ENCODE measurements at regions of chr19 and their contacts with region 1.

Region 1: DNA sequence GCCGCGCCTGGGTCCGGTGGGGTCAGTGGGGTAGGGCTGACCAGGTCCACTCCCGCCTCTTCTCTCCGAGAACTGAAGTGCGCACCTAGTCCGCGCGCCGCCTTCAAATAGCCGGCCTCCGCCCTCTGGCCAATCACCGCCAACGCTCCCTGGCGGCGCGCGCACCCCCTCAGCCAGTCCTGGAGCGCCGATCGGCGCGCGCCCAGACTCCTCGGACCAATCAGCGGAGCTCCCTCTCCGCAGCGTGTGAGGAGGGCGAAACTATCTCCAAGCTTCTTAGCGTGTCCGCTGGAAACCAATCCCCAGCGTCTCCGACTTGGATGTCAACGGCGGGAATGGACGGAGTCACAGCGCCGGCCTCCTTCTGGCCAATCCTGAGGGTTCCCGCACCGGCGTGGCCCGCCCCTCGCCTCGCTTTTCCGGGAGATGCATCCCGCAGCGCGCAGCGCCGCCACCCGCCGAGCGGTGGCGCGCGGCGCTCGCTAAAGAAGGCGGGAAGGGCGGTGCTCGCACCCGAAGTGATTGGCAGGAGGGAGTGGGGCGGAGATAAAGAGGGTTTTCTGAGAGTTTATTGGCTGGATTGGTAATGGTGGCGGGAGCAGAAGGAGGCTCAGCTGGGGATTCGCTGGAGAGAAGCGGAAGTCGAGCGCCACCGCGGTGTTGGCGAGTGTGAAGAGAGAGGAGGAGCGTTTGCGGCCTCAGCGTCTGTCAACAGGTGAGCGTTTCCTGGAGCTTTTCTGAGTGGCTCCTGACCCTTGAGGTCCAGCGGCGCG is at the start of gene ASF1B:
- DNase-seq: peak; percentile 100
- H3K4me3 ChIP-seq: peak within 1 kb of the TSS; percentile 95
- H3K27ac ChIP-seq: peak within 1 kb of the TSS; percentile 85
- H3K4me1 ChIP-seq: peaks cover 21% of the 10 kb centered on the region
- CTCF ChIP-seq: peak; percentile 73
- total RNA-seq, gene ASF1B: 115 and 202 TPM in 2 replicates

Region 2: DNA sequence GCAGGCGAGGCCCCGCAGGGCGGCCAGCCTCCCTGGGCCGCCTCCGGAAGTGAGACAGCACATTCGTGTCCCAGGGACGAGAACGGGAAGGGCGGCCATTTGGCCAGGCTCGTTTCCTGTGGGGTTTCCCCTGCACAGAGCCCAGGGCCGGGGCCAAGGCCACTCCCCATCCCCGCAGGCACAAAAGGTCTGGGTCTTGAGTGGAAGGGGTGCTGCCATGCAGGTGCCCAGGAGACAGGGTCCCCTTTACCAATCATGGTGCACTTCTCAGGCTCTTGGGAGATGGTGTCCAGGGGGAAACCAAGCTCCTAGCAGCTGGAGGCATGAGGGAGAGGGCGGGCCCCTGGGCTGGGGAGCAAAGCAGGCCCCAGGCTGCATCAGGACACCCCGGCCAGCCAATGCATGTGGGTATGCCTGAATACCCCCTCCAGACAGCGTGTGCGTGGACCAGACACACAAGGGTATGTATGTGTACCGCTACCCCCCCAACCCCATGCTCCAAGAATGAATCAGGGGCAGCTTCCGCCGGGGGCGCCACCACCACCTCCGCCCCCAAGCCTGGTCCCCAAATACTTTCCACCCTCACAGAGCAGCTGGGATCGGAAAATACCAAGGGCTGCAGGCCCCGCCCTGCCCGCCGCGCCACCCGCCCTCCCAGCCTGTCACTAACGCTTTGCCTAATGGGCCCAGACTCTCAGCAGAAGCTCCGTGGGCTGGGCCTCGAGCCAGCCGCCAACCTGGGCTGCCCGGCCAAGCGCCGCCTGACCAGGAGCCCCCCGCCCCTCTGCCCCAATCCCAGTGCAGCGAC is 297.4 kb before region 1 on chr19:
- CTCF ChIA-PET with region 1: interaction called, 10 read pairs
- POLR2A ChIA-PET with region 1: interaction called, 3 read pairs
- intact Hi-C with region 1: no loop called
- DNase-seq: peak; percentile 76
- H3K4me3 ChIP-seq: peak overlapping the region; percentile 65
- H3K27ac ChIP-seq: peak overlapping the region; percentile 64
- H3K4me1 ChIP-seq: peaks cover 70% of the 10 kb centered on the region
- CTCF ChIP-seq: 0 out of 2 replicates have a peak, but pooled peaks have one; percentile 24

Region 3: GRCh38 chr19:14005349-14006242 is 131.1 kb before region 1 on chr19:
- CTCF ChIA-PET with region 1: no interaction called
- POLR2A ChIA-PET with region 1: no interaction called
- intact Hi-C with region 1: no loop called
- DNase-seq: peak; percentile 91
- H3K4me3 ChIP-seq: peak overlapping the region; percentile 78
- H3K27ac ChIP-seq: peak overlapping the region; percentile 87
- H3K4me1 ChIP-seq: peaks cover 49% of the 10 kb centered on the region
- CTCF ChIP-seq: no peak

Region 4: GRCh38 chr19:14035709-14036108 is 101.0 kb before region 1 on chr19:
- CTCF ChIA-PET with region 1: no interaction called
- POLR2A ChIA-PET with region 1: no interaction called
- intact Hi-C with region 1: no loop called
- DNase-seq: no peak
- H3K4me3 ChIP-seq: no peak overlapping the region
- H3K27ac ChIP-seq: no peak overlapping the region
- H3K4me1 ChIP-seq: peaks cover 4% of the 10 kb centered on the region
- CTCF ChIP-seq: no peak

Region 5: GRCh38 chr19:14073261-14073924 is 63.3 kb before region 1 on chr19:
- CTCF ChIA-PET with region 1: no interaction called
- POLR2A ChIA-PET with region 1: no interaction called
- intact Hi-C with region 1: loop called (anchors 1 kb)
- DNase-seq: peak; percentile 88
- H3K4me3 ChIP-seq: peak overlapping the region; percentile 76
- H3K27ac ChIP-seq: peak overlapping the region; percentile 62
- H3K4me1 ChIP-seq: peaks cover 29% of the 10 kb centered on the region
- CTCF ChIP-seq: no peak; the same call in 1 of the 2 replicates

Region 6: GRCh38 chr19:14091081-14091812 is 45.4 kb before region 1 on chr19:
- CTCF ChIA-PET with region 1: interaction called, 4 read pairs
- POLR2A ChIA-PET with region 1: interaction called, 3 read pairs
- intact Hi-C with region 1: loop called (anchors 1 kb)
- DNase-seq: peak; percentile 83
- H3K4me3 ChIP-seq: peak overlapping the region; percentile 80
- H3K27ac ChIP-seq: peak overlapping the region; percentile 89
- H3K4me1 ChIP-seq: peaks cover 21% of the 10 kb centered on the region
- CTCF ChIP-seq: peak; percentile 79

Region 7: GRCh38 chr19:14117668-14118164 is 19.0 kb before region 1 on chr19 and contains the start of gene PRKACA:
- CTCF ChIA-PET with region 1: no interaction called
- POLR2A ChIA-PET with region 1: interaction called, 3 read pairs
- intact Hi-C with region 1: loop called (anchors 1 kb)
- DNase-seq: peak; percentile 99
- H3K4me3 ChIP-seq: peak within 1 kb of the TSS; percentile 94
- H3K27ac ChIP-seq: no peak within 1 kb of the TSS
- H3K4me1 ChIP-seq: peaks cover 31% of the 10 kb centered on the region
- CTCF ChIP-seq: no peak
- total RNA-seq, gene PRKACA: 18.0 and 21.1 TPM in 2 replicates

Region 8: DNA sequence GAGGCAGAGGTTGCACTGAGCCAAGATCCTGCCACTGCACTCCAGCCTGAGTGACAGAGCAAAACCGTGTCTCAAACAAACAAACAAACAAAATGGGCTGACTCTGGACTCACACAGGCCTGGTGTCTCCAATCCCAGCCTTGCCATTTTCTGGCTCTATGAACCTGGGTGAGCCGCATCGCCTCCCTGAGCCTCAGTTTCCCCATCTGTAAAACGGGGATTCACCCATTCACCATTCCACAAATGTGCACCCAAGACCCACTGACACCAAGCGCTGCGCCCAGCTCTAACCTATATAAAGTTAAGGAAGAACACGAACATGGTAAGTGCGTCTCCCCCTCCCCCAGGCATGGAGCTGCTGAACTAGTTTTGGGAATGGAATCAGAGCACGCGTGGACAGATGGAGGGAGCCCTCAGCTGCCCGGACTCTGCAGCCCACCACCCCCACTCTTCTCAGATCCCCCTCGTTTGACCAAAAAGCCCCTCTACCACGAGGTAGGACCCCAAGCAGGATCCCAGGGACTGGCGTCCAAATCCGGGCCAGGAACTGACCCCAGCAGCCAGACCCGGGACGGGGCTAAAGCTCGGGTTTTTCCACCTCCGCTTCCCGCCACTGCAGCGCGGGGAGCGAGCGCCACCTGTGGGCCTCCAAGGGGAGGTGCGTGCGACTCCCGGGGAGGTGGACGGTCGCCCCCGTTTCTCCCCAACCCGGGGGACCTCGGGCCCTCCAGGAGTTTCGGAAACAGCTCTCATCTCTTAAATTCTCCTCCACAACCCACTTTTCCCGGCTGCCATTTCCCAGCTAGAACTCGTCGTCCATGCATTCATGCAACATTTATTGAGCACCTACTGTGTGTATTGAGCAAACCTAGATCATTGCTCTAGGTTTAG is 211.5 kb after region 1 on chr19:
- CTCF ChIA-PET with region 1: interaction called, 3 read pairs
- POLR2A ChIA-PET with region 1: no interaction called
- intact Hi-C with region 1: loop called (anchors 5 kb)
- DNase-seq: peak; percentile 71
- H3K4me3 ChIP-seq: peak overlapping the region; percentile 41
- H3K27ac ChIP-seq: no peak overlapping the region
- H3K4me1 ChIP-seq: peaks cover 20% of the 10 kb centered on the region
- CTCF ChIP-seq: peak; percentile 99

Region 9: GRCh38 chr19:14405758-14406644 is 269.3 kb after region 1 on chr19:
- CTCF ChIA-PET with region 1: no interaction called
- POLR2A ChIA-PET with region 1: no interaction called
- intact Hi-C with region 1: loop called (anchors 2 kb)
- DNase-seq: peak; percentile 94
- H3K4me3 ChIP-seq: peak overlapping the region; percentile 4
- H3K27ac ChIP-seq: no peak overlapping the region
- H3K4me1 ChIP-seq: peaks cover 4% of the 10 kb centered on the region
- CTCF ChIP-seq: peak; percentile 59; the same call in 1 of the 2 replicates

Measured in OCI-LY7 (cell line).